GM12878 (cell line): ENCODE measurements at regions of chr14 and their contacts with region 1.

Region 1: GRCh38 chr14:64232095-64232838 is 61.9 kb downstream of the ESR2 start:
- DNase-seq: peak; percentile 88
- ATAC-seq: peak; percentile 70
- H3K4me3 ChIP-seq: no peak overlapping the region; the same call in 1 of the 2 replicates
- H3K27ac ChIP-seq: peak overlapping the region; percentile 46
- H3K4me1 ChIP-seq: peaks cover 52% of the 10 kb centered on the region
- H3K27me3 ChIP-seq: no peaks in the 10 kb centered on the region
- CTCF ChIP-seq: no peak
- EP300 ChIP-seq: peak; percentile 83 to 90; a peak in 3 of 4 replicates
- POLR2A ChIP-seq: no peak
- RAD21 ChIP-seq: no peak

Region 2: DNA sequence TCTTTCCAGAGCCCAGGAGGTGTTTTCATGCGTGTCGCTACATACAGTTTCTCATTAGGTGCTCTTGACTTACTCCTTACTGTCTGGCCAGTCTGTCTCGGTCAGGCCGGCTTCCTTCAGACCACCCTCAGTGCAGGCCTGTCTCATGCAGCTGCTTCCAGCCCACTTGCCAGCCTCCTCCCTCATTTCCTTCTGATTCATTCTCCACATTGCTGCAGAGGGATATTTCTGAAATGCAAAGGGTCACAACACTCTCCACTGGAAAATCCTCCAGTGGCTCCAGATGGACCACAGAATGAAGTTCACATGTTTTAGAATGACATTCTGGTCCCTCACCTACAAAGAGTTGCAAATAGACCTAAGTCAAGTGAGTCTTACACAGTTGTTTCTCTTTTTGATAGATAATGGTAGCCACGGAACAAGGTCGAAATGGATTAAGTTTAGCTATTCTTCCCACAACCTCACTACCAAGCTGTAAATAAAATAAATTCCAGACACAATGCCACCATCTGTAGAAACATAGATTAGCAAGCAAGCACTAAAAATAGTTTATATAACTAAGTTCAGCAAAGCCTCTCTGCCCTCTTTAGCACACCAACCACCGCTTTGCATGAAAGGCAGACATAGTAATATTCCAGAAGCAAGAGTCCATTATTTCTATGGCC is 85.0 kb before region 1 on chr14:
- CTCF ChIA-PET with region 1: no interaction called
- POLR2A ChIA-PET with region 1: no interaction called
- RAD21 ChIA-PET with region 1: no interaction called
- SMC1A ChIA-PET with region 1: no interaction called
- in situ Hi-C with region 1: no loop called
- intact Hi-C with region 1: no loop called
- DNase-seq: no peak
- ATAC-seq: no peak
- H3K4me3 ChIP-seq: no peak overlapping the region
- H3K27ac ChIP-seq: no peak overlapping the region
- H3K4me1 ChIP-seq: no peaks in the 10 kb centered on the region
- H3K27me3 ChIP-seq: no peaks in the 10 kb centered on the region
- CTCF ChIP-seq: no peak
- EP300 ChIP-seq: no peak
- POLR2A ChIP-seq: no peak
- RAD21 ChIP-seq: no peak

Region 3: GRCh38 chr14:64196814-64197411 is 35.4 kb before region 1 on chr14:
- CTCF ChIA-PET with region 1: interaction called, 6 read pairs
- POLR2A ChIA-PET with region 1: interaction called, 3 read pairs
- RAD21 ChIA-PET with region 1: interaction called, 12 read pairs
- SMC1A ChIA-PET with region 1: interaction called, 21 read pairs
- in situ Hi-C with region 1: no loop called
- intact Hi-C with region 1: loop called (anchors 5 kb)
- DNase-seq: no peak
- ATAC-seq: peak; percentile 81
- H3K4me3 ChIP-seq: peak overlapping the region; percentile 27; the same call in 1 of the 2 replicates
- H3K27ac ChIP-seq: peak overlapping the region; percentile 68
- H3K4me1 ChIP-seq: peaks cover 30% of the 10 kb centered on the region
- H3K27me3 ChIP-seq: no peaks in the 10 kb centered on the region
- CTCF ChIP-seq: no peak
- EP300 ChIP-seq: peak; percentile 52 to 53; a peak in 3 of 4 replicates
- POLR2A ChIP-seq: no peak; the same call in 1 of the 2 replicates
- RAD21 ChIP-seq: no peak

Region 4: GRCh38 chr14:64209444-64210131 is 22.7 kb before region 1 on chr14:
- CTCF ChIA-PET with region 1: interaction called, 7 read pairs
- POLR2A ChIA-PET with region 1: interaction called, 3 read pairs
- RAD21 ChIA-PET with region 1: interaction called, 11 read pairs
- SMC1A ChIA-PET with region 1: interaction called, 8 read pairs
- in situ Hi-C with region 1: no loop called
- intact Hi-C with region 1: no loop called
- DNase-seq: peak; percentile 48
- ATAC-seq: peak; percentile 94
- H3K4me3 ChIP-seq: no peak overlapping the region
- H3K27ac ChIP-seq: no peak overlapping the region
- H3K4me1 ChIP-seq: peaks cover 5% of the 10 kb centered on the region; the same call in 1 of the 2 replicates
- H3K27me3 ChIP-seq: no peaks in the 10 kb centered on the region
- CTCF ChIP-seq: no peak
- EP300 ChIP-seq: peak; percentile 60 to 78; a peak in 2 of 4 replicates
- POLR2A ChIP-seq: peak; percentile 32; the same call in 1 of the 2 replicates
- RAD21 ChIP-seq: no peak

Region 5: GRCh38 chr14:64218344-64219240 is 13.7 kb before region 1 on chr14:
- CTCF ChIA-PET with region 1: interaction called, 11 read pairs
- POLR2A ChIA-PET with region 1: interaction called, 7 read pairs
- RAD21 ChIA-PET with region 1: interaction called, 18 read pairs
- SMC1A ChIA-PET with region 1: interaction called, 19 read pairs
- in situ Hi-C with region 1: no loop called
- intact Hi-C with region 1: no loop called
- DNase-seq: no peak
- ATAC-seq: peak; percentile 75
- H3K4me3 ChIP-seq: peak overlapping the region; percentile 15; the same call in 1 of the 2 replicates
- H3K27ac ChIP-seq: peak overlapping the region; percentile 54
- H3K4me1 ChIP-seq: peaks cover 30% of the 10 kb centered on the region
- H3K27me3 ChIP-seq: no peaks in the 10 kb centered on the region
- CTCF ChIP-seq: no peak
- EP300 ChIP-seq: 0 out of 4 replicates have a peak, but pooled peaks of 1 of the 2 experiments have one; percentile 8
- POLR2A ChIP-seq: no peak
- RAD21 ChIP-seq: no peak